Activated CD4-positive, alpha-beta T cell treated with anti-CD3 and anti-CD28 coated beads, Interleukin-2, amount 10 ng/mL, durations not matched to agents 24 days and 14 days (primary cell): ENCODE measurements at regions of chr19 and their contacts with region 1.

Region 1: DNA sequence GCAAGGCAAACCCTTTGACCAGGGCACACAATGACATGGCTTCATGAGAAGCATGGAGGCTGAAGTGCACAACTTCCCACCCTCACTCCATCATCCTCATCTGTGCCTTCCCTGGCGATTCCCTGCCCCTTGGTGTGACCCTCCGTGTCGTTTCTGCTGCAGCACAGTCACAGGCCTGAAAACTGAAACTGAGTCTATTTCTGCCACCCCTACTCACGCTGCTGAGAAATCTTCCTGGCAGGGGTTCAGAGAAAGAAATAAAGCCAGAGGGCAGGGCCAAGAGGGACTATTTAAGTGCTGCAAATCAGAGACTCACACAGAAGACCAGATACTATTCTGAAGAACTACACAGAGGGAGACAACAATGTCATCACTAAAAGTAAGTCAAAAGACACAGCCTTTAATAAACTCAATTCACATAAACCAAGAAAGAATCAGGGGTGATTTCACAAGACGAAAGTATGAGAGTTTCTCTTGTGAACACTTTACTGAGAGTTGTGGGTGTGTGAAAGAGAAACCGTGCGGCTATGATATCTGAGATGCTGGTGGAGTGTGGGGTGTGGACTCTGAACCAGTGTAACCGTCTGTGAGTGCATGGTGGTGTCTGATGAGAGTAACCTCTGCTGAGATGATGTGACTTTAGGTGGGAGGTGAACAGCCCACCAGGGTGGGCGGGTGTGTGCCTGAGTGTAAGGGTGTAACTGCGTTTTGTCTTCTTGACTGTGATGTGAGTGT is 23.5 kb downstream of the LGALS16 start:
- DNase-seq: peak; percentile 83
- H3K4me3 Mint-ChIP-seq: peak overlapping the region; percentile 76
- H3K27ac Mint-ChIP-seq: peak overlapping the region; percentile 80
- H3K4me1 Mint-ChIP-seq: peaks cover 42% of the 10 kb centered on the region
- H3K27me3 Mint-ChIP-seq: no peaks in the 10 kb centered on the region

Region 2: GRCh38 chr19:39539519-39540332 is 139.5 kb before region 1 on chr19 and contains the start of gene EID2:
- intact Hi-C with region 1: loop called (anchors 5 kb)
- DNase-seq: peak; percentile 98
- H3K4me3 Mint-ChIP-seq: peak within 1 kb of the TSS; percentile 91
- H3K27ac Mint-ChIP-seq: peak within 1 kb of the TSS; percentile 96
- H3K4me1 Mint-ChIP-seq: peaks cover 42% of the 10 kb centered on the region
- H3K27me3 Mint-ChIP-seq: peaks cover 3% of the 10 kb centered on the region
- total RNA-seq, gene EID2: 17.2 and 17.6 TPM in 2 replicates

Region 3: GRCh38 chr19:39590265-39590664 is 89.0 kb before region 1 on chr19:
- intact Hi-C with region 1: no loop called
- DNase-seq: no peak
- H3K4me3 Mint-ChIP-seq: no peak overlapping the region
- H3K27ac Mint-ChIP-seq: no peak overlapping the region
- H3K4me1 Mint-ChIP-seq: no peaks in the 10 kb centered on the region
- H3K27me3 Mint-ChIP-seq: no peaks in the 10 kb centered on the region

Region 4: DNA sequence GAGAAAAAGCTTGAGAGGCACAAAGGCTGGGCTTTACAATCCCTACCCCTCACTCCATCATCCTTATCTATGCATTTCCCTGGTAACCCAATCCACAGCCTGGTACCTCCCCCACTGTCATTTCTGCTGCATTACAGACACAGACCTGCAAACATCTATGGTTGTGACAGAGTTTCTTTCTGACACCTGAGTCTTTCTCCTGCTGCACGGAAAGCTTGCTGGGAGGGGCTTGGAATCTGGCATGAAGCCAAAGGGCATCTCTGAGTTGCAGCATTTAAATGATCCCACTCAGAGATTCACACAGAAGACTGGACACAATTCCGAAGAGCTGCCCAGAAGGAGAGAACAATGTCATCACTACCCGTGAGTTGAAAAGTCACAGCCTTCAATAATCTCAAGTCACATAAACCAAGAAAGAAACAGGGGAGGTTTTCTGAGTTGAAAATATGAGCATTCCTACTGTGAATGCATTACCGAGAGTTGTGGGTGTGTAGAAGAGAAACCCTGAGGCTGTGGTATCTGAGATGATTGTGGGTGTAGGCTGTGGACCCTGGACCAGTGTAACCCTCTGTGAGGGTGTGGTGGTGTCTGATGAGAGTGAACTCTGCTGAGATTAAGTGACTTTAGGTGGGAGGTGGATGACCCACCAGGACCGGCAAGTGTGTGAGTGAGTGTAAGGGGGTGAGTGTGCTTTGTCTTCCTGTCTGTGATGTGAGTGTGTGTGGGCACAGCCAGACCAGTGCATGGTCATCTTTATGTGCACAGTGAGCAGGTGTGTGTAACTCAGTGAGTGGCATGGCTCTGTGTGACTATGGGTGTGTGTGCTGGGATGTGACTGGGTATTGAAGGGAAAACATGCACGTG is 25.2 kb after region 1 on chr19 and contains the start of gene LGALS14:
- intact Hi-C with region 1: loop called (anchors 1 kb)
- DNase-seq: no peak
- H3K4me3 Mint-ChIP-seq: peak within 1 kb of the TSS; percentile 26
- H3K27ac Mint-ChIP-seq: peak within 1 kb of the TSS; percentile 87
- H3K4me1 Mint-ChIP-seq: peaks cover 24% of the 10 kb centered on the region
- H3K27me3 Mint-ChIP-seq: no peaks in the 10 kb centered on the region
- total RNA-seq, gene LGALS14: not detected in 2 replicates

Region 5: GRCh38 chr19:39738814-39739213 is 59.6 kb after region 1 on chr19:
- intact Hi-C with region 1: loop called (anchors 5 kb)
- DNase-seq: no peak
- H3K4me3 Mint-ChIP-seq: no peak overlapping the region
- H3K27ac Mint-ChIP-seq: no peak overlapping the region
- H3K4me1 Mint-ChIP-seq: peaks cover 35% of the 10 kb centered on the region
- H3K27me3 Mint-ChIP-seq: peaks cover 3% of the 10 kb centered on the region

Region 6: GRCh38 chr19:39765091-39766076 is 86.2 kb after region 1 on chr19:
- intact Hi-C with region 1: loop called (anchors 2 kb)
- DNase-seq: peak; percentile 79
- H3K4me3 Mint-ChIP-seq: no peak overlapping the region
- H3K27ac Mint-ChIP-seq: no peak overlapping the region
- H3K4me1 Mint-ChIP-seq: peaks cover 4% of the 10 kb centered on the region
- H3K27me3 Mint-ChIP-seq: peaks cover 22% of the 10 kb centered on the region